ENCODE measurements at regions of chr21 and their contacts with region 1.

Region 1: GRCh38 chr21:25895565-25896205 is 160.9 kb downstream of the GABPA start:
- DNase-seq: no peak
- H3K4me3 ChIP-seq: no peak overlapping the region
- H3K4me3 Mint-ChIP-seq: no peak overlapping the region
- H3K27ac Mint-ChIP-seq: no peak overlapping the region
- H3K4me1 ChIP-seq: no peaks in the 10 kb centered on the region
- H3K4me1 Mint-ChIP-seq: no peaks in the 10 kb centered on the region
- H3K27me3 ChIP-seq: no peaks in the 10 kb centered on the region
- H3K27me3 Mint-ChIP-seq: no peaks in the 10 kb centered on the region
- CTCF ChIP-seq: peak in 1 of 2 experiments; percentile 19

Region 2: GRCh38 chr21:25857308-25858074 is 38.2 kb before region 1 on chr21:
- CTCF ChIA-PET with region 1: no interaction called
- POLR2A ChIA-PET with region 1: no interaction called
- intact Hi-C with region 1: no loop called
- DNase-seq: no peak
- H3K4me3 ChIP-seq: no peak overlapping the region
- H3K4me3 Mint-ChIP-seq: no peak overlapping the region
- H3K27ac Mint-ChIP-seq: no peak overlapping the region
- H3K4me1 ChIP-seq: no peaks in the 10 kb centered on the region
- H3K4me1 Mint-ChIP-seq: no peaks in the 10 kb centered on the region
- H3K27me3 ChIP-seq: no peaks in the 10 kb centered on the region; the same call in 1 of the 2 replicates
- H3K27me3 Mint-ChIP-seq: no peaks in the 10 kb centered on the region
- CTCF ChIP-seq: no peak

Region 3: GRCh38 chr21:25997788-25998611 is 102.3 kb after region 1 on chr21:
- CTCF ChIA-PET with region 1: no interaction called
- POLR2A ChIA-PET with region 1: no interaction called
- intact Hi-C with region 1: loop called (anchors 5 kb)
- DNase-seq: peak; percentile 76 to 81
- H3K4me3 ChIP-seq: no peak overlapping the region
- H3K4me3 Mint-ChIP-seq: peak overlapping the region; percentile 24
- H3K27ac Mint-ChIP-seq: peak overlapping the region; percentile 65
- H3K4me1 ChIP-seq: peaks cover 36% of the 10 kb centered on the region
- H3K4me1 Mint-ChIP-seq: peaks cover 31% of the 10 kb centered on the region
- H3K27me3 ChIP-seq: no peaks in the 10 kb centered on the region
- H3K27me3 Mint-ChIP-seq: no peaks in the 10 kb centered on the region
- CTCF ChIP-seq: no peak

Measured in Caco-2 (cell line).